Lower lobe of right lung (tissue), 2 donors: ENCODE measurements at regions of chr10 and their contacts with region 1.

Region 1: GRCh38 chr10:95430231-95430951 is 130.8 kb downstream of the SORBS1 start:
- DNase-seq: no peak
- ATAC-seq: peak; percentile 90 to 91
- H3K4me3 ChIP-seq: no peak overlapping the region
- H3K27ac ChIP-seq: no peak overlapping the region
- H3K4me1 ChIP-seq: peaks cover 25% of the 10 kb centered on the region
- H3K27me3 ChIP-seq: no peaks in the 10 kb centered on the region
- CTCF ChIP-seq: peak; percentile 94

Region 2: DNA sequence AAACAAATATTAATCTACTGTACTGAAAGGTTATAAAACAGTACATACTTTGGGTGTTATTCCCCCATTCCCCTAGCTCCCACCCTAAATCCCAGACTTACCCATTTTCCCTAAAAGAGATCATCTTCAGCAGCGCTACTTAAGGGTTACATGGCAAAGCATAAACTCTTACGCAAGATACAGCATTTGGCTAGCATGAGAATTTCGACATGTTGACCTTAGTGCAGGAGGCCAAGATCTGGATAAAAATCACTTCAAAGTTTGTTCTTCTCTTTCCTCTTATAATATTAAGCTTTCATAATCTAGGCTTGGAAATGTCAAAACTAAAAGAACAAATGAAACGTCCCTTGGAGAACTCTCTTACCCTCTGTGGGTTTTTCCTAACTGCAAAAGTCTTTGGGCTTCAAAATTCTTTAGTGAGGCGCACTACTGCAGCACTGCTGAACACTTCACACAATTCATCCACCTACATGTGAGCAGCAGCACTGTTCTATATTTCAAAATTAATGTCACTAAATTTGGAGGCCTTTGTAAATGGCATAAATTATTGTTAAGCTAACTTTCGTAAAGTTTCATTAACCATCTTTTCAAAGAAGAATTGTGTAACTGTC is 80.1 kb before region 1 on chr10:
- intact Hi-C with region 1: no loop called
- DNase-seq: no peak
- ATAC-seq: peak; percentile 81 to 84
- H3K4me3 ChIP-seq: no peak overlapping the region
- H3K27ac ChIP-seq: peak overlapping the region; percentile 66
- H3K4me1 ChIP-seq: peaks cover 19% of the 10 kb centered on the region
- H3K27me3 ChIP-seq: no peaks in the 10 kb centered on the region
- CTCF ChIP-seq: no peak

Region 3: DNA sequence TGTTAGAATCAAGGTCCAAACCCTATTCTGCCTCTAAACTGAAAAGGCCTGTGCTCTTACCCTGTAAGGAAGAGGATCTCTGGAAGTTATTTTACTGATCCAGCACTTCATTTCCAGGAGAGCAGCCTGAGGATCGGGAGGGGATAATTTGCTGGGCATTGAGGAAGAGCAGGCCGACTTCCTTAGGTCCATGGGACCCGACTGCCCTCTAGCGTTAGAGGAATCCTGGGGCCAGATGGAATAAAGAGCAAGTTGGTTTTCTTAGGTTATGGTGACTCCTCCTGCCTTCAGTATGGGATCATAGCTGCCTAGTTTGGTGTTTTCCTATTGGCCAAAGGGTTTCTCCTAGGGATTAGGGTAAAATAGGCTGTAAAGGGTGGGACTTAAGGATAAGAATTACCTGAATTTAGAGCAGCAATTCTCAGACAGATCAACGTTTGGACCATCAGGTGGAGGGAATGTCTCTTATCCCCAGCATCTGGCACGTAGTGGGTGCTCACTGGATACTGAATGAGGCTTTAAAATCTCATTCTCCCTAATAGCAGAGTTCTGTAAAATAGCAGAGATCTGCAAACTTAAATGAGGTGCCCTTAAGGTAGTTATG is 170.8 kb after region 1 on chr10:
- intact Hi-C with region 1: loop called (anchors 5 kb)
- DNase-seq: peak; percentile 70
- ATAC-seq: peak; percentile 93 to 94
- H3K4me3 ChIP-seq: no peak overlapping the region
- H3K27ac ChIP-seq: no peak overlapping the region
- H3K4me1 ChIP-seq: no peaks in the 10 kb centered on the region
- H3K27me3 ChIP-seq: no peaks in the 10 kb centered on the region
- CTCF ChIP-seq: peak; percentile 94